Sciatic nerve (tissue), 2 donors: ENCODE measurements at regions of chr22 and their contacts with region 1.

Region 1: DNA sequence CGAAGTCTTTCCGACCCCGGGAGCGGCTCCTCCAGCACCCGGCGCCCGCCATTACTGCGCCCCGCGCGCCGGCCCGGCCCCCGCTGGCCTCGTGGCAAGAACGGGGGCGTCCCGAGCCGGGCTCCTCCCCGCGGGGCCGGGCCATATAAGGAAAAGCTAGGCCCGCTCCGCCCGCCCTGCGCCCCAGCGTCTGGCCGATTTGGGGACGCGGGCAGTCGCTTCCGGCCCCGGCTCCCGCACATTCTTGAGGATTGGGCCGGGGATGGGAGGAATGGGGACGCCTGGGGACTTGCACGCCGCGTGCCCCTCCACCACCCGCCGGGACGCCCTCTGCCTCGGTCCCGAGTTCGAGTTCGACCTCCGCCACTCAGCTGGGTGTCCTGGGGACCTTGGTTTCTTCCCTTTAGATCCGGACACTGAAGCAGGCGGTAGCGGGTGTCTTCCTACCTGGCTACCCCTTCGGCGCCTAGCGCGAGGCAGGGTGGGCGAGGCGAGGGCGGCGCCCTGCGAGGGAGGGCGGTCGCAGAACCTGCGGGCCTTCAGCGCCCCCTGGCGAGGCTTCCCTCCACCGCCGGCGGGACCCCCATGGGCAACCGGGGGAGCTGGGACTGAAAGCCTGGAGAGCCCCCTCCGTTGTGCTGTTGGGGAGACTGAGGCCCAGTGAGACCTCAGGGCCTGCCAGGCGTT is 3.8 kb downstream of the SMTN start:
- DNase-seq: peak; percentile 94
- ATAC-seq: peak; percentile 77

Region 2: DNA sequence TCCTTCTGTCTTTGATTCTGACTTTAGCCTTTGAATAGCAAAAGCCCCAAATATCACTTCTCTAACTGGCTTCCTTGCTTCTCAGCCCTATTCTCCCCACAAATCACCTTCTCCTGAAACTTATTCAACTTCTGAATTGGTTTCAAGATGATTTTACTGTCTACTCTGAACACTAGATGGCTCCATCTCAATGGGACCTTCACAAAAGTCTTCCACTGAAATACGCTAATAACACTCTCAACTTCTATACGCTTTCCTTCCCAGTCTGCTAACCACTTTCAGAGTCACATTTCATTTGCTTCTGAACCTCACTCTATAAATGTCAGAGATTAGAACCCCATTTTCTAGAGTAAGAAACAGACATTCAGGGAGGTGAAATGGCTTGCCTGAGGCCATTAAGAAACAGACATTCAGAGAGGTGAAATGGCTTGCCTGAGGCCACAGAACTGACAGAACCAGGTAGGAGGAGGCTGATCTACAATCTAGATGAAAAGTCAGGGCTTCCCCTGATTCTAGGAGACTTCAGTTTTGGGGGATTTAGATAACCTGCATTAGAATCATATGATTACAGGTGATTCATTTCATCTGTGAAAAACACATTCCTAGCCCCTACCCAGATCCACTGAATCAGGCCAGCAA is 137.0 kb before region 1 on chr22:
- intact Hi-C with region 1: loop called (anchors 5 kb)
- DNase-seq: no peak
- ATAC-seq: peak; percentile 86

Region 3: DNA sequence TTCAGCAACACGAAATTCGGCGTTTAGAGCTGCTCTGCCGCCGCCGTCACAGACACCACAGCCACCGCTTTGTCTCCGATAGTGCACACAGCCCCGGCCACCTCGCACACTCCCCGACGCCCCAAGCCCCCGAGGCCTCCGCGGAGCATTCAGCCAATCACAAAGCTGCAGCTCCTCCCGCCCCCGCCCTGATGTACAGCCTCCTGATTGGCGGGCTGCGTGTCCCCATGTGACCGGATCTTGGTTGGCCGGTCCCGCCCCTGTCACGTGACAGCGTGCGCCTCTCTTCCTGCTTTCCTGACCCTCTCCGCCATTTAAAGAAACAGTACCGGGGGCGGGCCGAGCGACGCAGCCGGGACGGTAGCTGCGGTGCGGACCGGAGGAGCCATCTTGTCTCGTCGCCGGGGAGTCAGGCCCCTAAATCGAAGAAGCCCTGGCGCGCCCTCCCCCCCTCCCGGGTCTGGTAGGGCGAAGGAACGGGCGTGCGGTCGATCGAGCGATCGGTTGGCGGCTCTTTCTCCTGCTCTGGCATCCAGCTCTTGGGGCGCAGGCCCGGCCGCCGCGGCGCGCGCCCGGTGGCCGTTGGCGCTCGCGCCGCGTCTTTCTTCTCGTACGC is 115.9 kb before region 1 on chr22 and contains the start of gene TUG1:
- intact Hi-C with region 1: loop called (anchors 5 kb)
- DNase-seq: peak; percentile 99
- ATAC-seq: peak; percentile 100
- total RNA-seq, gene TUG1: 95.7 TPM